PC-9 (cell line): ENCODE measurements at regions of chr6 and their contacts with region 1.

Region 1: DNA sequence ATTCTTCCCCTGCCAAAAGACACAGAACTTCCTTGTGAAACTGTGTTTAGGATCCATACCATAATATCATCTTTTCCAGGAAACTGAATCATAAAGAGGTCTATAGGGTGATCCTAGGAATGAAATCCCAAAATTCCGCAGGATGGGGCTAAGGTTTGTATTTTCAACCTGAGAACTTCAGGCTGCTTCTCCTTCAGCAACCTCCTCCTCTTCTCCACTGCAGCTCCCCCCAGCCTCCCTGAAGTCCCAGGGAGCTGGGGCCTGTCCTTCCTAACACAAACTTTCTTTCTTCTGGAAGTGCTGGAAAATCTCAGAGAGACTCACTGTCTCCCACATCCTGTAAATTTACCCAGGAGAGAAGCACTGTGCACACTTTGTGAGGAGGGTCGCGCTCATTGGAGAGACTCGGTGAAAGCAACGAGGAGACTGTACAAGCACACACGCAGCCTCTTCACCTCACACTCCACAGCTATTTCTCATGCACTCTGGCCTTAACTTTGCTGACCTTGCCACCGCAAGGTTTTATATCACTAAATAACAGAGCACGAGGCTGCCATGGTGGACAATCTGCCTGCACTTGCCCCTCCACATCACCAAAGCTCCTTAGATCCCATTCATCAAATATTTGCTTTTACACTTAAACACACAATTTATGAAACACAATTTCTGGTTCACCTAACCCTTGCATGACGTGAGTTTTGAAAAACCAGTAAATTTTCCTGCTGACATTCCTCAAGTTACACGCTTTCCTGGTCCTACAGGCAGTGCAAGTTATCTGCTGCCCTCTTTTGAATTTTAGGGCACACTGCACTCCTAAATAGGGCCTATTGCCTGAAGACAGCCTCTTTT is 14.3 kb downstream of the ID4 start:
- DNase-seq: peak; percentile 43 to 68
- H3K4me3 ChIP-seq: no peak overlapping the region
- H3K27ac ChIP-seq: no peak overlapping the region
- H3K4me1 ChIP-seq: 0 out of 2 replicates have a peak, but pooled peaks cover 4% of the 10 kb centered on the region
- H3K27me3 ChIP-seq: no peaks in the 10 kb centered on the region
- CTCF ChIP-seq: peak; percentile 88

Region 2: GRCh38 chr6:18595774-18596530 is 1255.5 kb before region 1 on chr6:
- CTCF ChIA-PET with region 1: no interaction called
- POLR2A ChIA-PET with region 1: no interaction called
- intact Hi-C with region 1: loop called (anchors 5 kb)
- DNase-seq: peak in 1 of 2 experiments; percentile 54
- H3K4me3 ChIP-seq: no peak overlapping the region
- H3K27ac ChIP-seq: no peak overlapping the region
- H3K4me1 ChIP-seq: no peaks in the 10 kb centered on the region
- H3K27me3 ChIP-seq: no peaks in the 10 kb centered on the region
- CTCF ChIP-seq: peak; percentile 95

Region 3: DNA sequence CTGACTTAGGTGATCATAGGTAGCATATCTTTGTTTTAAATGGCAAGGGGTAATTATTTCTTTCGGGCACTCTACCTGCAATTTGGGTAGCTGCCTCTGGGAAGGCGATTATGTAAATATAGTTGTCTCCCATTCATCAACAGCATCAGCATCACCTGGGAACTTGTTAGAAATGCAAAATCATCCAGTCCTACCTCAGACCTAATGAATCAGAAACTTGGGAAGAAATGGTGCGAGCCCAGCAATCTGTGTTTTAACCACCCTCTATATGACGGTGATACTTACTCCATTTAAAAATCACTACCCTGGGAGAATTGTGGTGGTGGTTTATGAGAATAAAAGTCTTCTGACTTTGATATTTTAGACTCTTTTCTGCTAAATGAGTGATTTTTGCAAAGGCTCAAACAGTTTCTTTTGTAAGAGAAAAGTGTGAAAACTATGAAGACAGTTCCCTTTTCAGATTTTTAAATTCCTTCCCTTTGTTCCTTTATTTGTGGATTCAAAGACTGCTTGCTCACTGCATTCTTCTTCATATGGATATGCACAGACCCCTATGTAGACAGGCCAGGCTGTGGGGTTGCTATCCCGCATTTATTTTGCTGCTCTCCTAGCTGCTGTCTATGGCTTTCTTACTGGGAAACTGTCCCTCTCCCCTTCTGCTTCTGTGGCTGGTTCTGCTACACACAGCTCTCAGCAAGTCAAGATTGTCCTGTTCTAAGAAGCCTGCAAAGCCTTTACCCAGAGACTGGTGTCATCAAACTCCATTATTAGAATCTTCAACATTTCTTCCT is 1099.0 kb before region 1 on chr6:
- CTCF ChIA-PET with region 1: no interaction called
- POLR2A ChIA-PET with region 1: no interaction called
- intact Hi-C with region 1: no loop called
- DNase-seq: no peak
- H3K4me3 ChIP-seq: no peak overlapping the region
- H3K27ac ChIP-seq: no peak overlapping the region
- H3K4me1 ChIP-seq: no peaks in the 10 kb centered on the region
- H3K27me3 ChIP-seq: no peaks in the 10 kb centered on the region
- CTCF ChIP-seq: no peak

Region 4: GRCh38 chr6:19024737-19025136 is 826.7 kb before region 1 on chr6:
- CTCF ChIA-PET with region 1: interaction called, 5 read pairs
- POLR2A ChIA-PET with region 1: no interaction called
- intact Hi-C with region 1: loop called (anchors 1 kb)
- DNase-seq: peak; percentile 43
- H3K4me3 ChIP-seq: no peak overlapping the region
- H3K27ac ChIP-seq: no peak overlapping the region
- H3K4me1 ChIP-seq: no peaks in the 10 kb centered on the region
- H3K27me3 ChIP-seq: no peaks in the 10 kb centered on the region
- CTCF ChIP-seq: peak; percentile 67

Region 5: DNA sequence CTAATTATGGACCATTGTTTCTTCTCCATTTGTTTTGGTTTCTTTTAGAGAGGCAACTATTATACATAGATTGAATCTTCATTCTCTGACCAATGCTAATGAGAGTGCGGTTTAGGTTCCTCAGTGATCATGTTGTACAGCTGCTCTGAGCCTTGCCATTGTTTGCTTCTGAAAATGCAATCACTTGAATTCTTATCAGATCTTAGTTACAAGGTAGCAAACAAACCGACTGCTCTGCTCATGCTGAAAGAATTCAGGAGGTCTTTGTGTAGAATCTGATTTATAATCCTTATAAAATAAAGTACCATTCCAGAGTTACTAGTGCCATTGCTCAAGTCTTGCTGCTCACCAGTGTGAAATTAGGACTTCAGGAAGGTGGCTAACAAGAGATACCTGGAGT is 583.4 kb before region 1 on chr6:
- CTCF ChIA-PET with region 1: no interaction called
- POLR2A ChIA-PET with region 1: no interaction called
- intact Hi-C with region 1: loop called (anchors 5 kb)
- DNase-seq: peak; percentile 40 to 95
- H3K4me3 ChIP-seq: no peak overlapping the region
- H3K27ac ChIP-seq: peak overlapping the region; percentile 51
- H3K4me1 ChIP-seq: peaks cover 30% of the 10 kb centered on the region
- H3K27me3 ChIP-seq: no peaks in the 10 kb centered on the region
- CTCF ChIP-seq: no peak

Region 6: GRCh38 chr6:19472847-19473246 is 378.6 kb before region 1 on chr6:
- CTCF ChIA-PET with region 1: no interaction called
- POLR2A ChIA-PET with region 1: no interaction called
- intact Hi-C with region 1: loop called (anchors 1 kb)
- DNase-seq: peak in 1 of 2 experiments; percentile 30
- H3K4me3 ChIP-seq: no peak overlapping the region
- H3K27ac ChIP-seq: no peak overlapping the region
- H3K4me1 ChIP-seq: peaks cover 25% of the 10 kb centered on the region
- H3K27me3 ChIP-seq: no peaks in the 10 kb centered on the region
- CTCF ChIP-seq: no peak

Region 7: DNA sequence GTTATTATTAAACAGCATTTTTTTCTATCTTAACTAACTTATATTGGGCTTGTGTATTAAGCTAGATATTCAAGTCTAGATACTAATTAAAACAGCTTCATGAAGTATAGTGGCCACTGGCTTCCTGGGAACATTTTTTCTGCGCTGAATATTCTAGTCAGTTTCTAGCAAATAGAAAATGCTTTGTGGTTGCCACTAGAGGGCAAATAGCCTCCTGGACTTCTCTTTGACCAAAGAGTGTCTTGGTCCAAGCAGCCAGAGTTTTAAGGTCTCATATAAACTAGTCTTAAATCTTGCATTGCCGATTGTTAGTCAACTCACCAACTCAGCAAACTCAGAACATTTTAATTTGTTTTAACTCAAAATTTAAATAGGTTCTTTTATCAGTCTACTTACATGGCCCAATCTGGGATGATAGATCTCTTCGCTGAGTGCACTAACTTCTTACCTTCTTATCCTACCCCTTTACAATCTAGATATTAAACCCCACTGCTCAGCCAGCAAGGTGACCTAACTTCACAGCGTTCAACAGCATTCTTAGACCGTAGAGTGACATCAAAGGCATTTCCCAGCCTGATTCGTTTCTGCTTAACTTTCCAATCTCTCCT is 38.8 kb before region 1 on chr6:
- CTCF ChIA-PET with region 1: no interaction called
- POLR2A ChIA-PET with region 1: interaction called, 5 read pairs
- intact Hi-C with region 1: loop called (anchors 1 kb)
- DNase-seq: no peak
- H3K4me3 ChIP-seq: no peak overlapping the region
- H3K27ac ChIP-seq: no peak overlapping the region
- H3K4me1 ChIP-seq: no peaks in the 10 kb centered on the region
- H3K27me3 ChIP-seq: no peaks in the 10 kb centered on the region
- CTCF ChIP-seq: peak; percentile 73

Region 8: DNA sequence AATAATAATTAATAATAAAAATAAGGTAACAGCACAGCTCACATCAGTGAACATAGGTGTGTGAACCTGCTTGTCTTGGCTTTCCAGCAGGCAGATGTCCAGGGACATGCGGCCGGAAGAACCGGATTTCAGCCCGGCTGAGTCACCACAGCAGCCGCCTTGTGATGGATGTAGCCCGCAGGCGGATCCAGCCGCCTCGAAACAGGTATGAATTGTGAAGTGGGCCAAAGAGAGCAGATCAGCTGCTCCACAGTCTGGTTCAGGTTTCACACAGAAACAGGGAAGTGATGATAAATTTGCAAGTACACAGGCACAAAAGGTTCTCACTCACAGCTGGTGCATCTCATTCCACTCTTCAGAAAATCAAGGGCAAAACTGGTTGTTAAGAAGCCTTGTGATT is 40.8 kb after region 1 on chr6:
- CTCF ChIA-PET with region 1: no interaction called
- POLR2A ChIA-PET with region 1: no interaction called
- intact Hi-C with region 1: no loop called
- DNase-seq: peak; percentile 96 to 97
- H3K4me3 ChIP-seq: no peak overlapping the region
- H3K27ac ChIP-seq: peak overlapping the region; percentile 82
- H3K4me1 ChIP-seq: peaks cover 34% of the 10 kb centered on the region
- H3K27me3 ChIP-seq: no peaks in the 10 kb centered on the region
- CTCF ChIP-seq: no peak

Region 9: GRCh38 chr6:20056350-20056992 is 205.0 kb after region 1 on chr6:
- CTCF ChIA-PET with region 1: no interaction called
- POLR2A ChIA-PET with region 1: no interaction called
- intact Hi-C with region 1: loop called (anchors 2 kb)
- DNase-seq: peak in 1 of 2 experiments; percentile 8
- H3K4me3 ChIP-seq: no peak overlapping the region
- H3K27ac ChIP-seq: no peak overlapping the region
- H3K4me1 ChIP-seq: no peaks in the 10 kb centered on the region
- H3K27me3 ChIP-seq: no peaks in the 10 kb centered on the region
- CTCF ChIP-seq: peak; percentile 76

Region 10: DNA sequence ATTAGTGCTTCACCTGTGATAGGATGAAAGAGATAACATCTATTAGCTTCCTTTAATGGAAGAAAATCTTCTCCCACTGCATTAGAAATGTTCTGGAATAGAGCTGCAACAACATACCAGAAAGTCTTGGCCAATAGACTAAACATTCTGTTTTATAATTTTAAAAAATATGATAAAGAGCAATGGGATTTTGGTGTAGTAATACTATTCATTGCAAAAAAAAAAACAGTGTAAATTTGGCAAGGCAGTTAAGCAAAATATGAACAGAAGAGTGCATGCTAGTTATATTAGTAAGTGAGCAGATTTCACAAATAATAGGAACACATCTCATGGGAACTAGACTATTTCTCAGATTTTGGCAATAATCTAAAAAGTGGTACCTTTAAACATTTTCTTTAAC is 1785.4 kb after region 1 on chr6:
- CTCF ChIA-PET with region 1: no interaction called
- POLR2A ChIA-PET with region 1: no interaction called
- intact Hi-C with region 1: no loop called
- DNase-seq: no peak
- H3K4me3 ChIP-seq: no peak overlapping the region
- H3K27ac ChIP-seq: no peak overlapping the region
- H3K4me1 ChIP-seq: peaks cover 13% of the 10 kb centered on the region; the same call in 1 of the 2 replicates
- H3K27me3 ChIP-seq: no peaks in the 10 kb centered on the region
- CTCF ChIP-seq: no peak